Common myeloid progenitor, CD34-positive (primary cell): ENCODE measurements at regions of chr9 and their contacts with region 1.

Region 1: DNA sequence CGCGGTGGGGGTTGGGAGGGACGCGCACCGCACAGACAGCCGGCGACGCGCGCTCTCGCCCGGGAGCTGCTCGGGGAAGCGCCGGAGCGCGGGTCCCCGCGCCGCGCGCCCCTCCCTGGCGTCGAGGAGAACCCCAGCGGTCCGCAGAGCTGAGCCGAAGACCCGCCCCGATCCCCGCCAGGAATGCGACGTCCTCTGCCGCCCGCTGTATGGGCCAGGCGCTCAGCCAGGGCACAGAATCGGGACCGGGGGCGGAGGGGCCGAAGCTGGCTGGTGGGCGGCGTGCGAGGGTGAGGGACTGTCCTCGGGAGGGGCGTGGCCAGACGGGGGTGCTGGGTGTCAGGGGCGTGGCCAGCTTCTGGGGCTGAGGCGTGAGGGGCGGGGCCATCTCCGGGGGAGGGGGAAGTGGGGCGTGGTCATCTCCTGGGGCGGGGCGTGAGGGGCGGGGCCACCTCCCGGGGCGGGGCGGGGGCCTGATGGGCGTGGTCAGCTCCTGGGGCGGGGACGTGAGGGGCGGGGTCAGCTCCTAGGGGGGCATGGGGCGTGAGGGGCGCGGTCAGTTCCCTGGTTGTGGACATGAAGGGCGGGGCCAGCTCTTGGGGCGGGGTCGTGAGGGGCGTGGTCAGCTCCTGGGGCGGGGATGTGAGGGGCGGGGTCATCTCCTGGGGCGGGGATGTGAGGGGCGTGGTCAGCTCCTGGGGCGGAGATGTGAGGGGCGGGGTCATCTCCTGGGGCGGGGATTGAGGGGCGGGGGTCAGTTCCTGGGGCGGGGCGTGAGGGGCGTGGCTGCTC is 965 bp downstream of the PTGDS start:
- DNase-seq: peak; percentile 43 to 59 (median 55)
- H3K4me3 ChIP-seq: peak overlapping the region in 4 of 7 experiments; percentile 19 to 64 (median 46)
- H3K27ac ChIP-seq: no peak overlapping the region
- H3K4me1 ChIP-seq: peaks cover 0 to 41% (median 36%) of the 10 kb centered on the region in 4 experiments
- H3K27me3 ChIP-seq: peaks cover 0 to 17% (median 4%) of the 10 kb centered on the region in 5 experiments

Region 2: DNA sequence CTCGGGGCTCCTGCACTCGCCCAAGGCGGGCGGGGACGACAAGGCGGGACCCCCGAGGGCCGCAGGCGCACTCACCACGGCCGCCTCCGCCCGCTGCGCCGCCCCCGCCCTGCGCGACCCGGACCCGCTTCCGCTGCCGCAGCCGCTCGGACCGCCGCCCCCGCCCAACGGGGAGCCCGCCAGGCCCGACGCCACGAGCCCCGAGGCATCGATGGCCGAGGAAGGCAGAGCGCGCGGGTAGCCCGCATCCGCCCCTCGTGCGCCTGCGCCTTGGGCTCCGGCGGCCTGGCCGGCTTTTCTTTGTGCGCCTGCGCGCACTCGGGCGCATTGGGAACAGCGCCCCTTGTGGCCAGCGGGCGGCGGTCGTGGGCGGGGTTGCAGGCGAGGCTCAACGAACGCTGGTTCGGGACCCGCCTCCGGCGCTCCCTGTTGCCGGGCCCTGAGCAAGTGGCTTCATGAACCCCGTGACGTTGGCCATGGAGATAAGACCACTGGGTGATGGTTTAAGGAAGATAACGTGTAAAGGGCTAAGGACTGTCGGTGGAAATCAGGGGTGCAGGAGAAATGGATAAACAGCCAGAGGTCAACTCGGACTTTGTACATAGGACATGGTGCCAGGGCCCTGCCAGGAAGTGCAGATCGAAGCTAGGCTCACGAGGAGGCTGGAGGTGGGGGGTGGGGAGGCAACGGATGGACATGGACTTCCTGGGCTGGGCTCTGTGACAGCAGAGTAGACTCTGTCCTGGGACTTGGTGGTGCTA is 33.6 kb before region 1 on chr9 and contains the starts of genes C8G and FBXW5:
- CTCF ChIA-PET with region 1: interaction called, 14 read pairs
- POLR2A ChIA-PET with region 1: no interaction called
- DNase-seq: peak; percentile 89 to 95 (median 94)
- H3K4me3 ChIP-seq: peak within 1 kb of the TSS; percentile 64 to 91 (median 81)
- H3K27ac ChIP-seq: peak within 1 kb of the TSS; percentile 54 to 81
- H3K4me1 ChIP-seq: peaks cover 0 to 29% (median 25%) of the 10 kb centered on the region in 4 experiments
- H3K27me3 ChIP-seq: no peaks in the 10 kb centered on the region

Region 3: DNA sequence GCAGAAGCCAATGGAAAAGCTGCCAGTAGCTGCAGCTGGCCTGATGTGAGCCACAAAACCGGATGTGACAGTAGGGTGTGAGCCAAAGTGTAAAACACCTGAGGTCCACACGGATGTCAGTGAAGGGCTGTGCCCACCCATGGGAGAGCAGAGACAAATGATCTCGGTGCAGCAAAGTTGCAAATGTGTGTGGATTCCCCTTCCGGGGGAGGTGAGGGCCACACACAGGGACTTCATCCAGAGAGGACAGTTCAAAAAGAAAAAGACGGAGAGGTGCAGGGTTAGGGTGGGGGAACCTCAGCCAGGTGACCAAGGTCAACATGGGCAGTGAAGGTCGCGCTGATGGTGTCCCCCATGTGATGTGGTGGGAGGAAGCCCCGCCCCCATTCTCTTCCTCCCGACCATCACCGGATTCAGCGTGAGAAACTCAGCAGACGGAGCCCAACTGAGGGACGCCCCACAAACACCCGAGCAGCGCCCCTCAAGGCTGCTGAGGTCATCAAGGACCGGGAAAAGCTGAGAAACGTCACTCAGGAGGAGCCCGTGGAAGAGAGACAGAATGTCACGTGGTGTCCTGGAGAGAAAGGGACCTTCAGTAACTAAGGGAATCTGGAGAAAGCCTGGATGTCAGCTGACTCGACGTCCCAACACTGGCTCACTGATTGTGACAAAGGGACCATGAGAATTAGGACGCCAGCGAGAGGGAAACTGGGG is 12.3 kb before region 1 on chr9:
- CTCF ChIA-PET with region 1: interaction called, 10 read pairs
- POLR2A ChIA-PET with region 1: no interaction called
- DNase-seq: peak in 1 of 3 donors; percentile 23
- H3K4me3 ChIP-seq: peak overlapping the region in 2 of 7 experiments; percentile 30 to 48
- H3K27ac ChIP-seq: no peak overlapping the region
- H3K4me1 ChIP-seq: peaks cover 0 to 8% (median 7%) of the 10 kb centered on the region in 4 experiments
- H3K27me3 ChIP-seq: peaks cover 0 to 2% (median 0%) of the 10 kb centered on the region in 5 experiments

Region 4: GRCh38 chr9:137000177-137000883 is 22.1 kb after region 1 on chr9:
- CTCF ChIA-PET with region 1: interaction called, 12 read pairs
- POLR2A ChIA-PET with region 1: no interaction called
- DNase-seq: peak in 2 of 3 donors; percentile 70 to 72
- H3K4me3 ChIP-seq: no peak overlapping the region
- H3K27ac ChIP-seq: no peak overlapping the region
- H3K4me1 ChIP-seq: peaks cover 0 to 46% (median 40%) of the 10 kb centered on the region in 4 experiments
- H3K27me3 ChIP-seq: peaks cover 0 to 17% (median 0%) of the 10 kb centered on the region in 5 experiments